ENCODE measurements at regions of chr17 and their contacts with region 1.

Region 1: GRCh38 chr17:49315551-49316257 is 46.3 kb downstream of the ZNF652 start:
- DNase-seq: no peak
- ATAC-seq: peak; percentile 93

Region 2: DNA sequence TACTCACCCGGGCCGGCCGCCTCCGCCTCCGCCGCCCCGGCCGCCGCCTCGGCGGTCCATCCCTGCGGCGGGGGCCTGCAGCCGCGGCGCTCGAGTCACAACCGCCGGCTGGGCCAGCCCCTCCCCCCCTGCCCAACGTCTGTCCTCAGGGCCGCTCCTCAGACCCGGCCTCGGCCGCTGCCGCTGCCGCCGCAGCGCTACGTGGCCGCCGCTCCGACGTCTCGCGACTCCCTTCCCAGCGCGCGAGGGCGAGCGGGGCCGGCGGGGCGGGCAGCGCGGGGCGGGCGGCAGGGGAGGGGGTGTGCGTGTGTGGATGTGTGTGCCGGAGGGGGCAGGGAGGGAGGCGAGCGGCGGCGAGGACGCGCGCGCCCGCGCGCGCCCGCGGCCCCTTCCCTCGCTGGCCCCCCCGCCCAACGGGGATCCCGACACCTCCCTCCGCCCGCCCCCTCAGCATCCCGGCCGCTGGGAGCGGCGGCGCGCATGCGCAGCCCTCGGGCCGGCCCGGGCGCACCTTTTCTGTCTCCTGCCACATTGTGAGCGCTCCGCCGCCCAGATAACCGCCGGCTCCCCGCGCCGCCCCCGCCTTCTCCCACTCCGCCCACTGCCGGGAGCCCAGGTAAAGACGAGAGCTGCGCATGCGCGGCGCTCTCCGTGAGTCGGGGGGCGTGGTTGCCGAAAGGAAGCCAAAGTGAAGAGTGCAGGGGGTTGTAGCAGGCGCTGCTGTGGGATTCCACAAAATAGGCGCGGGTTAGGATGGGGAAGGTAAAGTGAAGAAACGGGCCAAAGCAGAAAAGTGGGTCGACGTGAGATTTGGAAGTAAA is 46.4 kb after region 1 on chr17 and contains the start of gene ZNF652:
- intact Hi-C with region 1: loop called (anchors 5 kb)
- DNase-seq: peak; percentile 94
- ATAC-seq: peak; percentile 92
- total RNA-seq, gene ZNF652: 19.0 TPM

Region 3: DNA sequence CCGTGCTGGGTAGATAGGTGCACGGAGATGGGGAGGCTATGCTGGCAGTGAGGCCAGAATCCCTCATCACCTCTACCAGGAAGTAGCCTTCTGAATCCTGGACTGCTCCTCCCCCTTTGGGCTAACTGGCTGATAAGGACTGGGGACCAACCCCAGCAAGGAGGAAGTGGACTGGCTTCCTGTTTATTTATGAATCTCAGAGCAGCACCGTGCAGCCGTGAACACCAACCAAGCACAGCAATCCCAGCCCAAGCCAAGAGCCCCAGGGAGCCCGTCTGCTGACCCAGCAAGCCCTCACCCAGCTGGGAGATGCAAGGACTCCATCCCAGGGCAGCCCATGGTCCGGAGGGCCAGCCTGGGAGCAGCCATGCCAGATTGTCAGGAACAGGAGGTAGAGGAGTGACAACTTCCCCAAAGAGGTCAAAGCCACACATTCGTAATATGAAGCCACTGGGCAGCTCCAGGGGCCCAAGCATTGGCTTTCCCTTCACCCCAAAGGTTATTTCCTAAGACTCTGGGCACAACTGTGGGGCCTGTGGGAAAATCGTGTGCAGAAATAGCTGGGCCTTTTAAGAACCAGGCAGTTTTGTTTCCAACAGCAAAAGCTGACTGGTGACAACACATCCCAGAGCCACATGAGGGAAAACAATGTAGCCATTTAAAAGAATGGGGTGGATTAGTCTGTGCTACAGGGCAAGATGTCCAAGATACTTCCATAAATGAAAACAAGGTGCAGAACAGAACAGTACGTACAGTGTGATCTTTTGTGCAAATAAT is 75.0 kb after region 1 on chr17:
- intact Hi-C with region 1: loop called (anchors 1 kb)
- DNase-seq: peak; percentile 68
- ATAC-seq: peak; percentile 45